ENCODE measurements at regions of chr1 and their contacts with region 1.

Region 1: DNA sequence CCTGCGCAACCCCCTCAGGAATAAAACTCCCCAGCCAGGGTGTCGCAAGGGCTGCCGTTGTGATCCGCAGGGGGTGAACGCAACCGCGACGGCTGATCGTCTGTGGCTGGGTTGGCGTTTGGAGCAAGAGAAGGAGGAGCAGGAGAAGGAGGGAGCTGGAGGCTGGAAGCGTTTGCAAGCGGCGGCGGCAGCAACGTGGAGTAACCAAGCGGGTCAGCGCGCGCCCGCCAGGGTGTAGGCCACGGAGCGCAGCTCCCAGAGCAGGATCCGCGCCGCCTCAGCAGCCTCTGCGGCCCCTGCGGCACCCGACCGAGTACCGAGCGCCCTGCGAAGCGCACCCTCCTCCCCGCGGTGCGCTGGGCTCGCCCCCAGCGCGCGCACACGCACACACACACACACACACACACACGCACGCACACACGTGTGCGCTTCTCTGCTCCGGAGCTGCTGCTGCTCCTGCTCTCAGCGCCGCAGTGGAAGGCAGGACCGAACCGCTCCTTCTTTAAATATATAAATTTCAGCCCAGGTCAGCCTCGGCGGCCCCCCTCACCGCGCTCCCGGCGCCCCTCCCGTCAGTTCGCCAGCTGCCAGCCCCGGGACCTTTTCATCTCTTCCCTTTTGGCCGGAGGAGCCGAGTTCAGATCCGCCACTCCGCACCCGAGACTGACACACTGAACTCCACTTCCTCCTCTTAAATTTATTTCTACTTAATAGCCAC is 696 bp downstream of the TGFB2 start:
- DNase-seq: no peak

Region 2: DNA sequence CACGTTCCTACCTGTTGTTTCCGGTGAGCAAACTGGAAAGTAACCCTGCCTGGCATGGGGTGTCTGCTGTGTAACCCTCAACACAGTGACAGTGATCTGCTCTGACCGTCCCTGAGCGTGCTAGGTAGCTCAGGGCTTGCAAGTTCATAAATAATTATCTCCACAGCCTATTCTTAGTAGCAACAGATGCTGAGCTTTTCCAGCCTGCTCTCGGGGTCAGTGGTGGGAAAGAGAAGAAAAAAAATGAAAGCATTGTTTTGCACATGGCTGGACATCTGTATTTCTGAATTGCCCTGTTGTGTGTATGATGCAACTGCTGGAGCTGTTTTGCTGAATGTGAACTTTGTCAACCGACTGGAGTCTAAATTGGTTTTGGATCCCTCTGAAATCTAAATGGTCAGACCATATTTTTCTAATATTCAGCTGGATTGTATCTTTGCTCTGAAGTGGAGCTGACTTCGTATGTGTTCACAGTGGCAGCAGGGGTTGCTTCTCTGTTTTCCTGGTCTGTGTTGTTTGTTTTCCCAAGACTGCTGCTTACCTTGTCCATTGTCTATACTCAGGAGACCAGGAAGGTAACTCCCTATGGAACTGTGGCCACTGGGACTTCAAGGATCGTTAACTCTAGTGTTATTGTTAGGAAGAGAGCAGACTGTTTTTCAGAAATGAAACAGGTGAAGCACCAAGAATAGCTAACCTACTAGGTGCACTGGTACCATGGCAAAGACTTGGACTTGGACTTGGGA is 26.3 kb after region 1 on chr1:
- intact Hi-C with region 1: no loop called
- DNase-seq: no peak

Region 3: DNA sequence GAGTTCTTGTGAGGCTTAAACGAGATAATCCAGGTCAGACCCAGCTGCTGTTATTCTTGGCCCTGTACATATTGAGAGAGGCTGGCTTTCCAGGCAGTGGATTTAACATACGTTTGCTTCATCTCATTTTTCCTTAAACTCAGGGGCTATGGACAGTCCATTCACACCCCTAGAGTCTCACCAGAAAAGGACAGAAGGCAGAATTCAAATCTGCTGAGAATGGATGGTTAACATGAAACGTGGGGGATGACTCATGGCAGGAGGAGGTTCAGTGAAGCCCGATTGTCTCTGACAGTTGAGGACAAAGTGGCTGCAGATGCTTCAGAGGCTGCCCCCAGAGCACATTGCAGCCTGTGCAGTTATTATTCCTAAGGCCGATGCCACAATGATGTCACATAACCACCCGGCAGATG is 38.8 kb after region 1 on chr1:
- intact Hi-C with region 1: no loop called
- DNase-seq: no peak

Region 4: DNA sequence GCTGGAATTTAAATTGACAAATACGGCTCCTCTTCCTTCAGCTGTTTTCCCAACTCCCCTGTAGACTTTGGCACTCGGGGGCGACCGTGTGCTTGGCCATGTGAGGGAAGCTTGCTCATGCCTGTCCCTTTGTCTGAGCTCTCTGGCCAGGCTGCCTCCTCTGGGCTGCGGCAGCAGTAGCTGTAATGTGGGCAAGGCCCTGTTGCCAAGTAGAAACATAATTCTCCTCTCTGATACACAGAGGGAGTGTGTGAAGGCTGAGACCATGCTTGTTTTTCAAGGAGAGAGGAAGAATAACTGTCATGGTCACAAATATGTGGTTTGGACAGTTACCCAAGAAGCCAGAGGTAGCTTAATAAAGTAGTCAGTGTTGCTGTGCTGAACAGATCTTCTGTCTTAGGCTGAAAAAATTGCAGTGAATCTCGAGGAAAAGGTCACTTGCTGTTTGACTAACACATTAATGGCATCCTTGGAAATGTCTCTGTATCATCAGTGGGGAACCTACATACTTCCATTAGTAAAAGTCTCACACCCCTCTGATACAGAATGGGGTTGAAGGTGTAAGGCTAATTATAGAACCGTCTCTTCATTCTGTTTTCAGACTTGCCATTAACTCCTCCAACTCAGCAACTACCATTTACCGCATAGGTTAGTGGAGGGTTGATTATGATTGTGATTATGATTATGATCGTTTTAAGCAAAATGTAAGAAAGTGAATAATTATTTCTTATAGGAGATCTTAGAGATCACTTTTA is 93.9 kb after region 1 on chr1:
- intact Hi-C with region 1: loop called (anchors 5 kb)
- DNase-seq: no peak

Region 5: DNA sequence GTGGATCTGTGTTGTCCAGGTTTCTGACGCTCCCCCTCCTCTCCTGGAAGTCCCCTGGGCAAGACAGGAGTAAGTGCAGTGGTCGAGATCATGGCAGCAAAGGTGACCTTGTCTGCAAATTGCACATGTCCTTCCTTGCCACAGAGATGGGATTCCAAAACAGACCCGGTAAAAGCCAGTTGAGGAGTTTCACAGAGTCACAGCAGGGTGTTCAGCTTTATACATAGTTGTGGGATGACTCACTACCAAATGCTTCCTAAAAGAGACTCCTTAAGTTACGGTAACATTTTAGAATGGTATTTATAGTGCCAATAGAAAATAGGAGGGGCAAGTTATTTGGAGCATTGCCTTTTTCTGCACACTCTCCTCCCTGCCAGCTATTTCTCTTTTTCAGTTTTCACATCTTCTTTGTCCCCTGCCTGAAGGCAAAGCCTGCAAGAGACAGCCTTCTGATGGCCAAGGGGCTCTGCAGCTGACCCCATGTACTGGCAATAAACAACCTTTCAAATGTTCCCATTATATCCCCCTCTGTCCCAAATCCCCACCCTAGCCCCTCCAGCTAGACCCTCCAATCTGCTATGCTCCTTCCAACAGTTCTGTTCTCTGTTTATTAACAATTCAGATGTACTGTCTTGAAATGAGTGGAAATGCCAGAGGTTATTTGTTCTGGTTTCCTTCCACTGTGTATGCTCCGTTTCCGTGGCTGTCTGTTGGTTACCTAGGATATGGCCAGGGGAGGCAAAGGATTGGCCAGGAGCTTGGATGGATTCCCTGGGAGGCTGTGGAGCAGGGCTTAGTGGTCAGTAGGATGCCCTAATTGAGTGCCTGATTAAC is 114.3 kb after region 1 on chr1:
- intact Hi-C with region 1: loop called (anchors 5 kb)
- DNase-seq: no peak

Region 6: GRCh38 chr1:218473522-218473921 is 127.7 kb after region 1 on chr1:
- intact Hi-C with region 1: loop called (anchors 5 kb)
- DNase-seq: no peak

Region 7: DNA sequence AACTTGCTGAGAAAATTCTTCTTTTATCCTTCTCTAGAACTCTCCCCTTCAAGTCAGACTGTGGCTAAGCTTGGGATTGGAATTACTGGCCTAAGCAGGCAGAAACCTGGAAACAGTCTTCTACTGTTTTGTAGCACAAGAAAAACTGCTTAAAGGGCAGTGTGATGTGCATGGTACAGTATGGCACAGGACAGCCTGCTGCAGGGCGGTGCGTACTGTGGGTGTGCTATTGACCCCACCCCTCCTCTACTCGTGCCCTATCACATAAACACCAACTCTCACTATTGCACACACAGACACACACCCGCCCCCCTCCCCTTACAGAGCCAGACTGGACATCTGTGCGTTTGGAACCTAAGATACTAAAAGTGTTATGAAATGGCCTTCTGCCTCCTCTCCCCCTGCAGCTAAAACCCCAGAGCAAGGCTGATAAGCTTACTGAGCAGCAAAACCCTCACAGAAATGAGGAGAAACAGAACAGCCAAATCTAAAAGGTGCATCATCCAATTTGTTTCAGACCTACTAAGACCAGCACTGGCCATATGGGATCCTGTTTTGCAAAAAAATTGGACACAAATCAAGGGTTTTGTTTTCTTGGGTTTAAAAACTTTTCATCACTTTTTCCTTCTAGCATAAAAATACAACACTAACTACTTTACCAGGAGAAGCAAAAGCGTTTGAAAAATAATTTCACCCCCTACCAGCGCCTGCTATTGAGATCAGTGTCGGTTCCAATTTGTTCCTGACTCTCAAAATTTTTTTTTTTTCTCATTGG is 472.0 kb after region 1 on chr1:
- intact Hi-C with region 1: loop called (anchors 10 kb)
- DNase-seq: no peak

Region 8: DNA sequence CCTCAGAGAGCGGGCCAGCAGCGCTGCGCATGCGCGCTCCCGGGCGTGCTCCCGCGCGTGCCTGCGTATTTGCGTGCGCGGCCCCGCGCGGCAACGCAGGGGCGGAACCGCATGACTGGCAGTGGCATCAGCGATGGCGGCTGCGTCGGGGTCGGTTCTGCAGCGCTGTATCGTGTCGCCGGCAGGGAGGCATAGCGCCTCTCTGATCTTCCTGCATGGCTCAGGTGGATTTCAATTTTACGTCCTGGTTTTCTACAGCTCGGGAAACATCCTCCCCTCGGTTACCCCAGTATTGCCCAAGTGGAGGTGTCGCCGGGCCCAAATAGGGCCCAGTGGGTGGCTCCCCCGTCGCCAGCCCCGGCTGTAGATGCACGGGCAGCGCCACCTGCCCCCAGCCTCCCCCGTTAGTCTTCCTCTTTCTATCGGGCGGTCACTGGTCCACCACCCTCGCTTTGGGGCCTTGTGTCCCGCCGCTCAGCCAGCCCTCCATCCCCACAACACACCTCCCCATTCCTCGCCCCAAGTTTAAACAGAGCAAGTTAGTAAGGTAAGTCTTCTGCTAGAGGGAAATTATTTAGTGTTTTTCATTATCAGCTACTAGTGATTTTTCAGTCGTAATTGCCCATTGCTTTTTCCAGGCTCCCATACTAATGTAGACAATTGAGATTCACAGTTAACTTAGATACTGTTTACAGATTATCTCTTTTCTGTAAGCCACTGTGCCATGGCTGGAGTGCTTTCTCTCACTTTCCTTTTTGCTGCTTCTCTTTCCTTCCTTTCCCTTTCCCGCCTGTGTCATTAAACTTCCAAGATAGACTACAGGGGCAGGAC is 828.1 kb after region 1 on chr1 and contains the start of gene LYPLAL1:
- intact Hi-C with region 1: loop called (anchors 5 kb)
- DNase-seq: peak; percentile 96
- total RNA-seq, gene LYPLAL1: 99.4 TPM

Region 9: DNA sequence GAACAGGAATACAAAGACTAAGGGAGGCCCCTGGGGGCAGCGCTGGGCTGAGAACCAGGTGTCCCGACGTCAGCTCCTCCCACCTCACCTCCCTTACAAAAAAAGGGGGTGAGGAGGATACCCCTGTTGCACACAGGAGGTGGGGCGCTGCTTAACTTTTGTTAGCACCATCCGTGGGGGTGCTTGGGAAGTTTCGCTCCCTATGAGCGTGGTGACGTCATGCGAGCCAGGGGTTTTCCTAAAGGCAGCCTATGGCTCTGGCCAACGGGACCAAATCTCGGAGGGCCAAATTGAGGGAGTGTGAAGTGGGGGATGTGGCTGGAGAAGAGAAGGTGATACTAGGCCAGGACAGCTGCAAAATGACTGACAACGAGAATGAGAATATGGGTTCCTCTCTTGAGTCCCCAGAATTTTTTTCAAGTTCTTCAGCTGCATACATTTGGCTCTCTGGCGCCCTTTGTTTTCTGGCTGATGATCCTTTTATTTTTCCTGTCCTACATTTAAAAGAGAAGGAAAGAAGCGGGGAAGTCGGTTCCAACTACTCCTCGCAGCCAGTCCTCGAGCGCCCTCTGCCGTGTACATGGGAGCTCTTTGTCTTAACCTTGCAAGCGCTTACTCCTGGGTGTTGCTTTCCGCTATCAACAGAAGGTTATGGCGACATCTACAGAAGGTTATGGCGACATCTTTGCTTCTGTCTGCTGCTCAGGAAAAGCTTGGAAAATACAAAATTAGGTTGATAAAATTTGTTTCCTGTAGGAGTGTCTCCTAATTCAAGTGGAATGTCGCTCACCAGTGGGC is 1315.0 kb after region 1 on chr1:
- intact Hi-C with region 1: loop called (anchors 10 kb)
- DNase-seq: peak; percentile 92